HEK293 (cell line): ENCODE measurements at regions of chr6 and their contacts with region 1.

Region 1: GRCh38 chr6:42453031-42453653 is 1.4 kb upstream of the TRERF1 start:
- H3K4me3 ChIP-seq: peak overlapping the region; percentile 60
- H3K27ac ChIP-seq: peak overlapping the region; percentile 99
- H3K4me1 ChIP-seq: peaks cover 26% of the 10 kb centered on the region
- CTCF ChIP-seq: no peak

Region 2: DNA sequence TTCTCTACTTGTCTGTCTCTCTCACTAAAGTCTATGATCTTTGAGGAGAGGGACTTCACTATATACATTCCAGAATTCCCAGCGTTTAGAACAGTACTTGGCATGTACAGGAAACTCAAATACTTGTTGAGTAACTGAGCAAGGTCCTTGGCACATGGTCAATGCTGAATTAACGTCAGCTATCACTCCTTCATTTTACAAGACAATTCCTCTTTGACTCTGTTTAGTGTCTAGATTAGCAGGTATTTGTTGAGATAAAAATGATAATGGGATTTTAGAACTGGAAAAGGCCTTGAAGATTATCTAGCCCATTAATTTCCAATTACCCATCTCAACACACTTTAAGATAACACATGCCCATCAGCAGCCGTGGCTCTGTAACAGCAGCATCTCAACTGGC is 251.8 kb before region 1 on chr6:
- CTCF ChIA-PET with region 1: no interaction called
- POLR2A ChIA-PET with region 1: no interaction called
- H3K4me3 ChIP-seq: no peak overlapping the region
- H3K27ac ChIP-seq: no peak overlapping the region
- H3K4me1 ChIP-seq: no peaks in the 10 kb centered on the region
- CTCF ChIP-seq: no peak

Region 3: DNA sequence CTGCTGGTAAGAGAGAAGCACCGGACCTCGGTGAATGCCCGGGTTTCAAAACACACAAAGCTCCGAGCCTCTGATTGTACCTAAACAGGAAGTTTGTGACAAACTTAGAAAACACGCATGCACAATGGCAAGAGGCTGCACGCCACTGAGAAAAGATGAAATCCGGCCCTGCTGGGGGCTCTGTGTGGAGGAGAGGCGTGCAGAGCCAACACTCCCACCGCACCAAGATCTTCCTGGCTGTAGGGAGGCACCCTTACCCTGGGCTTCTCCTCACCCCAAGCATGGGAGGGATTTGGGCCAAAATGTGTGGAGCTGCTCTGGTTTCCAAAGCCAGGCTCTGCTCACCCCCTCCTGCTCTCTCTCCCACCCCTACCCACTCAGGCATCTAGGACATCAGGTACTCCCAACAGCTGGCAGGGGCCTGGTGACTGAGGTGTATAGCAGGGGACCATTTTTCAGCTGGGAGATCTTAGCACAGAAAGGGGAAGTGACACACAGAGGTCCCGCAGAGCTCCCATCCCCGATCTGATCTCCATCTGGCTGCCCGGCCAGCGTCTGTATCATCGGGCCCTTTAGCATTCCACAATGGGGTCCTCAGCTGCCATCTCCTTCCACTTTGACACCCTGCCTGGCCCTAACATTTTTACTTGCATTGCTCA is 85.7 kb before region 1 on chr6:
- CTCF ChIA-PET with region 1: no interaction called
- POLR2A ChIA-PET with region 1: no interaction called
- H3K4me3 ChIP-seq: no peak overlapping the region
- H3K27ac ChIP-seq: no peak overlapping the region
- H3K4me1 ChIP-seq: no peaks in the 10 kb centered on the region
- CTCF ChIP-seq: no peak

Region 4: DNA sequence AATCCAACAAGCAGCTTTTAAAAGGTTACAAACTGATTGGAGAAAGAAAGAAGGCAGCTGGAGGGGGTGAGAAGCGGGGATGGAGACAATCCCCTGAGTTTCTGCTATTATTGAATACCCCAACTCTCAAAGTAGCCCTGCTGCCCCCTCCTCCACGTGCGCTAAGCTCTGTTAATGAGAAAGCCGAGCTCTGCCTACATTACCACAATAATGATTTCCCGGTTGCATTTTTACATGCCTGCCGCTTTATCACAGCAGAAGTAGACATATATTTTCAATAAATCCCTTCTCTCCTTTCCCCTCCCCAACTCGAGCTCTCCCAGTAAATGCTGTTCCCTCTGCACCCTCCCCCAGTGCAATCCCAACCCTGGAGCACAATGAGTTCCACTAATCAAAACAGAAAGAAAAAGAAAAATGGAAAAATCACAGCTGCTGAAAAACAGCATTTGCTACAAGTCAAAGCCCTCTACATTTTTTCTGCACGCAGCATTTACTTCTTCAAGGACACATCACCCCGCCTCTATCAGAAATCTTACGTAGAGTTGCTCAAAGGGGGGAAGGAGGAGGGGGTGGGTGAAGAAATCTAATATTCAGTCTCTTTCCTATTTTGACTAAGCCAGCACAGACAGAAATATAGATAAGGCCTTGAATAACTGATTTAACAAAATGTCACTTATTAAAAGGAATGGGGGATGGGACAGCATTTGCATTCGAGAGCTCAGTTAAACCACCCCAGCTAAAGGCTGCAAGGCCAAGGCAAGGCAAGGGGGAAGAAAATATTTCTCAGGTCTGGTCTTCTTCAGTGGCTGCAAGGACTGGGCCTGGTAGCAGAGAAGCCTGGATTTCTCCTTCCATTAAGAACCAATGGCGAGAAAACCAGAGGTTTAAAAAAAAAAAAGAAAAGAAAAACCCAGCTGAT is 12.1 kb before region 1 on chr6:
- CTCF ChIA-PET with region 1: interaction called, 4 read pairs
- POLR2A ChIA-PET with region 1: interaction called, 21 read pairs
- H3K4me3 ChIP-seq: no peak overlapping the region
- H3K27ac ChIP-seq: no peak overlapping the region
- H3K4me1 ChIP-seq: peaks cover 12% of the 10 kb centered on the region; the same call in 1 of the 2 replicates
- CTCF ChIP-seq: no peak

Region 5: DNA sequence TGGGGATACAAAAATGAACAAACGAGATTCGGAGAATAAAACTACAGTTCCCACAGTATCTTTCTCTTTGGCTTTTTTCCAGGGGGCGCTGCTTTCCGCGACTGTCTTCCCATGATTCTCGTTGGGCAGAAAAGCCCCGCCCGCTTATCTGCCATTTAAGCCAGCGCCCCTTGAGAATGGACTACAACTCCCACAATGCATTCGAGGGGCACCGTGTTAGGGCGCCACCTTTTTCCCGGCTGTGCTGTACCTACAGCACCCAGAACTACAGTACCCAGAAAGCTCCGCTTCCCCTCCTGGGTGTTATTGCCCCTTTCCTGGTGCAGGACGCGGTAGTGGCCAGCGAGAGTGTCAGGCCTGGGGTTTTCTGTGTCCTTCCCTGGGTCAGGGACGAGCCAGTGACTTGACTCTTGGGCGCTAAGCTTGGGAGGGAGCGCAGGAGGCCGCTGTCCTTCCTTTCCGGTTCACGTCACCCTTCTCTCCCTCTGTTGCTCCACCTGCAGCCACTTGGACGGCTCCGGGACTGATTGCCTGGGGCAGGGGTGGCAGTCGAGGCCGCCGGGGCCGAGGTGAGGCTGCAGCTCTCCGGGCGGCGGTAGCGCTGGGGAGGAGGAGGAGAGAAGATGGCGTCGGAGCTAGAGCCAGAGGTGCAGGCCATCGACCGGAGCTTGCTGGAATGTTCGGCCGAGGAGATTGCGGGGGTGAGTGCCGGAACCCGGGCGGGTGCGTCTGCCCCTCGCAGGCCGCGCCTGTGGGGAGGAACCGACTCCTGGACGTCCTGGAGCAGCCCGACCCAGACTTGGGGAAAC is 110.8 kb after region 1 on chr6 and contains the start of gene UBR2:
- CTCF ChIA-PET with region 1: interaction called, 4 read pairs
- POLR2A ChIA-PET with region 1: interaction called, 16 read pairs
- H3K4me3 ChIP-seq: peak within 1 kb of the TSS; percentile 82
- H3K27ac ChIP-seq: peak within 1 kb of the TSS; percentile 59
- H3K4me1 ChIP-seq: no peaks in the 10 kb centered on the region
- CTCF ChIP-seq: peak; percentile 96

Region 6: DNA sequence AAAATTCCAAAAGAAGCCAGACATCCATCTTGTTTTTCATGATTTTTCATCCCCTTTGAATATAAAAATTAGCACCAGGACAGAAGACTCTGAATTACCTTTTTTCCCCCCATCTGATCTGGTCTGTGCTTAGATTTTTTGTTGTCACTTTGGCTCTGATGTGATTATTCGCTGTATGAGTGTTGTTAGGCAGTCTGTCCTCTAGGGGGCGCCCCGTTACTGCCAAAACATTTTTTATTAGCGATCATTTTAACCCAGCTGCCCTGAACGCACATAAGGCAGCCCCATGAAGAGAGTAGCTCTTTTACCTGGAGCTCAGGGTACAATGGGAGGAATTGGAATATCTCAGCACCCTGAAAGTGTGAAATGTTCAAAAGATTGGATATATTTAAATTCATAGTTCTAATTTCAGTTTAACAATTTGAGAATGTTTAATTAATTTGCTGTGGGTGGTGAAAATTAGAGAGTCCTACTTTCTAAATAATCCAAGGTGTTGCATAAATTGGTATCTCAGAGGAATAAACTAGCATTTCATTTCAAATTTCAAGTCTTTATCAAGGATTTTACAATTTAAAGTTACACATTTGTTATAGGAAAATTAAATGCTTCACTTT is 208.5 kb after region 1 on chr6:
- CTCF ChIA-PET with region 1: no interaction called
- POLR2A ChIA-PET with region 1: no interaction called
- H3K4me3 ChIP-seq: no peak overlapping the region
- H3K27ac ChIP-seq: no peak overlapping the region
- H3K4me1 ChIP-seq: no peaks in the 10 kb centered on the region
- CTCF ChIP-seq: peak; percentile 47; the same call in 1 of the 2 replicates

Region 7: DNA sequence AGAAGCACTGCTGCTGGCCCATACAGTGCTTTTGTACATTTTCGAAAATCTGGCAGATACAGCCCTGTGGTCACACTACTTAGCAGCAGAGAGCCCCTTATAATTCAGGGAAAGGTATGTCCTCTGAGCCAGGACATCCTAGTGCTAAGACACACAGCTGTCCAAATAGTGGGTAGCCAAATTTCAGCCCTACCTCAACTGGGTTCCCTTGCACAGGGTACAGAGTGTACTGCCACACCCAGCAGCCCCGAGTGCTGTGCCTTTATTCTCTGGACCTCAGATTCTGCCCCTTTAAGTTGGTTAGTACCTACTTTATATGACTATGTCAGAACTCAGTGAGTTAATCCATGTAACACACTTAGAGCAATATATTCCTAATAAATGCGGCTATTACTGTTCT is 221.6 kb after region 1 on chr6:
- CTCF ChIA-PET with region 1: no interaction called
- POLR2A ChIA-PET with region 1: no interaction called
- H3K4me3 ChIP-seq: no peak overlapping the region
- H3K27ac ChIP-seq: no peak overlapping the region
- H3K4me1 ChIP-seq: peaks cover 8% of the 10 kb centered on the region; the same call in 1 of the 2 replicates
- CTCF ChIP-seq: no peak